ENCODE measurements at regions of chr2 and their contacts with region 1.

Region 1: GRCh38 chr2:119311356-119311755 is 55.3 kb downstream of the C2orf76 start:
- DNase-seq: no peak

Region 2: GRCh38 chr2:119366649-119367471 is 55.5 kb after region 1 on chr2 and contains the starts of genes C2orf76 and DBI:
- intact Hi-C with region 1: loop called (anchors 5 kb)
- DNase-seq: peak; percentile 99
- total RNA-seq, gene C2orf76: 11.7 TPM
- total RNA-seq, gene DBI: 251 TPM

Region 3: GRCh38 chr2:119407430-119408220 is 96.3 kb after region 1 on chr2:
- intact Hi-C with region 1: loop called (anchors 2 kb)
- DNase-seq: no peak

Measured in cardiac septum (tissue), 1 donor.